GM10248 (cell line): ENCODE measurements at regions of chr9 and their contacts with region 1.

Region 1: GRCh38 chr9:98074115-98074990 is 17.8 kb downstream of the NANS start:
- DNase-seq: peak; percentile 77
- CTCF ChIP-seq: peak; percentile 91

Region 2: DNA sequence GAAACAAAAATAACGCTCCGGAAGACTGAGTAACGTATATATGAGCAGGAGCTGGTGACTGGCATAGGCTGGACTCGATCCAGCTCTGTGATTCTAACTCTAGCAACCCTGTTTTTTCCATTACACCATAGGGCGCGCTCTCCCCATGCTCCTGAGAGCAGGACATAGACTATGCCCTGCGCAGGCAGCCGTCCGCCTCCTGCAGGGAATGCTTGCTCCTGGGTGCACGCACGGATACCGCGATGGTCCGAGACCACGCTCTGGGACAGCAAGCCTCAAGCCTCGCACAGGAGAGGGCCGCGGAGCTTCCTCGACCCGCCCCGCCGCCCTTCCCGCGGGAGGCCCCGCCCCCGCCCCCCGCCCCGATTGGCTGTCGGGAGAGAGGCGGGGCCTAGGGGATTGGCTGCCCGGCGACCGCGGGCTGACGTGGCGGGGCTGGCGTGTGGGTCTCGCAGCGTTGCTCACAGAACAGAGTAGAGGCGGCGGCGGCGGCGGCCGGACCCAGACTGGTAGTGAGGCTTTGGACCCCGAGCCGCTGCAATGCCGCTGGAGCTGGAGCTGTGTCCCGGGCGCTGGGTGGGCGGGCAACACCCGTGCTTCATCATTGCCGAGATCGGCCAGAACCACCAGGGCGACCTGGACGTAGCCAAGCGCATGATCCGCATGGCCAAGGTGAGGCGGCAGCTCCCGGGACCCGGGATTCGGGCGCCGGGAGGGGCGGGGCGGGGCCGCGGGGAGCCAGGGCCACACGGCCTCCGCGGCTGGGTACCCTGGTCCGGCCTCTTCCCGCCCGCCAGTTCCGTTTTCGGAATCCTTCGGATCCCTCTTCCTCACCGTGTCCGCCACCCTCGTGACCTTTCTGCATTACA is 17.9 kb before region 1 on chr9 and contains the start of gene NANS:
- CTCF ChIA-PET with region 1: interaction called, 22 read pairs
- POLR2A ChIA-PET with region 1: interaction called, 7 read pairs
- DNase-seq: peak; percentile 99
- CTCF ChIP-seq: no peak

Region 3: DNA sequence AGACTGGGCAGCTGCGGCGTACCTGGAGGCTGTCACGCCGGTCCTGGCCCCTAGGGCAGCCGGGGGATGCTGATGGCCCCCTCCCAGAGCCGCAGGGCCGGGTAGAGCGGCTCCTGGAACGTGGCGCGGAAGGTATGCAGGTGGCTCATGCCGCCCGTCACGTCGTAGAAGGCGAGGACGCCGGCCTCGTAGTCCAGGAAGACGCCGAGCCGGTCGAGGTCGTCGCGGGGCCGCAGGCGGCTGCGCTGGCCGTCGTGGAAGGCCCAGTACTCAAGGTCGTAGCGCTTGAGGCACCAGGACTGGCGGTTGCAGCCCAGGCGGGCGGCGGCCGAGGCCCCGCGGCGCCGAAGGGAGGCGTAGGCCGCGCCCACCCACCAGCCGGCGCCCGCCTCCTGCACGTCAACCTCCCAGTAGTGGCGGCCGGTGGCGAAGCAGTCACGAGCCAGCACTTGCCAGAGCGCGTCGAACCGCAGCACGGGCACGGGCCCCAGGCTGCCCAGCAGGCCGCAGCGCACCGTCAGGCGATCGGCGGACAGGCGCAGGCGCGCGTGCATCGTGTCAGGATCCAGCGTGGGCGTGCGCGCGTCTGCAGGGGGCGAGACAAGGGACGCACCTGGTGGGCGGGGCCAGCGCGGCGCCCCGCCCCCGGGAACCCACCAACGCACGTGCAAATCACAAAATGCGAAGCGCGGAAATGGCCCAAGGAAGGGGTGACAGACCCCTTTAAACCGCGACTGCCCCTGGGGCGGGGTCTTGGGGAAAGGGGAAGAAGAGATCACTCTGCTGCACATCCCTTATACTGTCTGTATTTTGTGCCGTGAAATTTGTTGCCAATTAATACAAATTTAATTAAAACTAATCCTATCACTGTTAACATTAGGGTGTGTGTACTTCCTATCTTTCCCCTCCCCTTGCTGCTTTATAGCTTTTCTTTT is 13.3 kb after region 1 on chr9:
- CTCF ChIA-PET with region 1: interaction called, 25 read pairs
- POLR2A ChIA-PET with region 1: no interaction called
- DNase-seq: peak; percentile 53
- CTCF ChIP-seq: no peak

Region 4: GRCh38 chr9:98118640-98119601 is 44.6 kb after region 1 on chr9 and contains the start of gene TRIM14:
- CTCF ChIA-PET with region 1: interaction called, 13 read pairs
- POLR2A ChIA-PET with region 1: no interaction called
- DNase-seq: peak; percentile 84
- CTCF ChIP-seq: peak; percentile 32